GM13977 (cell line): ENCODE measurements at regions of chr11 and their contacts with region 1.

Region 1: GRCh38 chr11:110200241-110200640 is 96.2 kb downstream of the RDX start:
- DNase-seq: no peak
- CTCF ChIP-seq: no peak

Region 2: GRCh38 chr11:110373051-110373702 is 172.9 kb after region 1 on chr11:
- in situ Hi-C with region 1: loop called (anchors 5 kb)
- DNase-seq: peak; percentile 69
- CTCF ChIP-seq: no peak

Region 3: DNA sequence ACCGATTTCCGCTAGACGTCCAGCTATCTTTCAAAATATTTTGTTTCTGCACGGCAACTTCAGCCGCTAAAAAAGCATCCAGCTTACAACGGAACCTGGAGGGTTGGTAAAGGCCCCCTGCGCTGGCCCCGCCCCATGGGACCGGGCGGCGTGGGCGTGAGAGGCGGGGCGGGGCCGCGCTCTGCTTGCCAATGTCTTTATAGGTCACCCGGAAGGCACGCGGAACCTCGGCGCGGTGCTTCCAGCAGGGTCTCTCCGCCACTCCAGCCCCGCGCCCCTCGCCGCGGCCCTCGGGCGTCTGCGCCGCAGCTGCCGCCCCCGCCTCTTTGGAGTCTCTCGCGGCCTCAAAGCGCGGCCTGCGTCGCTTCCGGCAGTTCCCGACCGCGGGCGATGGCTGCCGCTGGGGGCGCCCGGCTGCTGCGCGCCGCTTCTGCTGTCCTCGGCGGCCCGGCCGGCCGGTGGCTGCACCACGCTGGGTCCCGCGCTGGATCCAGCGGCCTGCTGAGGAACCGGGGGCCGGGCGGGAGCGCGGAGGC is 229.6 kb after region 1 on chr11 and contains the start of gene FDX1:
- in situ Hi-C with region 1: loop called (anchors 10 kb)
- DNase-seq: peak; percentile 87
- CTCF ChIP-seq: peak; percentile 79

Region 4: DNA sequence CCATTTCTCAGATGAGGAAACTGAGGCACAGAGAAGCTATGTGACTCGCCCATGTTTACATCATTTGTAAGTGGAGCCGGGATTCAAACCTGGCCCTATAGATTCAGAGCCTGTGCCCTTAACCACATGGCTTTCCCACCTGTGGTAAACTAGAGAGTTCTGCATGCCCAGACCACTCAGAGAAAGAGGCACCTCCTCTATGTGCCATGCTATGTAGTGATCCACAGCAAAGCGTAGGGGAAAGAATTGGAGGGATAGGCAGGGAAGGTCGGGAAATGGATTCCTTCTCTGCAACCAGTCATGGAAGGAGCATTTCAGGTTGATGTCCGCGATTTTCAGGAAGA is 1029.9 kb after region 1 on chr11:
- in situ Hi-C with region 1: loop called (anchors 25 kb)
- DNase-seq: peak; percentile 24
- CTCF ChIP-seq: no peak